ENCODE measurements at regions of chr15 and their contacts with region 1.

Region 1: DNA sequence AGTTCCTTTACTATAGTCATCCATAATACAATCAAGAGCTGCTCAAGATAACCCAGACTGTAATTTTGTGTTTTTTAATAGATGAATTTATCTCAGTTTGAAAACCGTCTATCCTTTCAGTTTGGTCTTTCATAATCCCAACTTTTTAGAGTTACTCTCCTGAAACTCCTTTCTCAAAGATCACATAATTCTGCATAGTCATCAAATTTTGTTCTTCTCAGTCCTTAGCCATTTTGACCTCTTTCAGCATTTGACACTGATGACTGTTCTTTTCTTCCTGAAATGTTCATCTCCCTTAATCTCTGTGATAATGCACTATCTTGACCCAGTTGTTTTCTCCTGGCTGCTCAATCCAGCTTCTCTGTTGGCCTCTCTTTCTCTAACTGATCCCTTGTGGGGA is 47.5 kb upstream of the RAD51 start:
- DNase-seq: no peak
- H3K4me3 Mint-ChIP-seq: no peak overlapping the region
- H3K27ac Mint-ChIP-seq: no peak overlapping the region
- H3K4me1 Mint-ChIP-seq: peaks cover 5% of the 10 kb centered on the region
- H3K27me3 Mint-ChIP-seq: no peaks in the 10 kb centered on the region

Region 2: GRCh38 chr15:40716165-40716564 is 68.6 kb after region 1 on chr15:
- intact Hi-C with region 1: loop called (anchors 10 kb)
- DNase-seq: no peak
- H3K4me3 Mint-ChIP-seq: no peak overlapping the region
- H3K27ac Mint-ChIP-seq: no peak overlapping the region
- H3K4me1 Mint-ChIP-seq: peaks cover 7% of the 10 kb centered on the region
- H3K27me3 Mint-ChIP-seq: no peaks in the 10 kb centered on the region

Region 3: DNA sequence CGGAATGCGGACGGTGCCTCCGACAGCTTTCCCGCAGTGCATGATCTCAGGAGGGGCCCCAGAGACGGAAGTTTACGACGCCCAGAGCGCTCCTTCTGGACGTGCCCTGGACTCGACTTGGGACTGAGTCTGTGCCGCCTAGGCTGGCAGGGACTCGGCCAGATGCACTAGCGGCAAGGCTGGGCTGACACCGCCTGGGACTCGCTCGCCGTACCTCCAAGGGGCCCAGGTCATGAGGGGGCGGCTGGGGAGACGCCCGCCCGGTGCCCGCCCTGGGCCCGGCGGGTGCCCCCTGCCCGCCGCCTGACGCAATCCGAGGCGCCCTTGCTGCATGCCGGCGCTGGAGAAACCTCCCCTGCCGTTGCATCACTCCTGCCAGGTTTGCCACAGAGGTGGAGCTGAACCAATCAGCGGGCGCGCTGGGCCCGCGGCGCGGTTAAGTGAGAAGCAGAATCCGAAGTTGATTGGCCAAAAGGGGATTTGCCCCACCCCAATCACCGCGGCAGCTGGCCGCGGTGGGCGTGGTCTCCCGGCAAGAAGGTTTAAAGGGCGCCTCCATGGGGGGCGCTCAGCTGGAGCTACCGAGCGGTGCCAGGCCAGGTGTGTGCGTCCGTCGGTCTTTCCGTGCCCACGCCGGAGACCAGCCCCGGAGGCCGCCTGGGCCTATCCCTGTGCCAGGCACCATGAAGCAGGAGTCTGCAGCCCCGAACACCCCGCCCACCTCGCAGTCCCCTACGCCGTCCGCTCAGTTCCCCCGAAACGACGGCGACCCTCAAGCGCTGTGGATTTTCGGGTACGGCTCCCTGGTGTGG is 305.6 kb after region 1 on chr15 and contains the start of gene CHAC1:
- intact Hi-C with region 1: no loop called
- DNase-seq: peak; percentile 99
- H3K4me3 Mint-ChIP-seq: peak within 1 kb of the TSS; percentile 92
- H3K27ac Mint-ChIP-seq: peak within 1 kb of the TSS; percentile 91
- H3K4me1 Mint-ChIP-seq: peaks cover 32% of the 10 kb centered on the region
- H3K27me3 Mint-ChIP-seq: no peaks in the 10 kb centered on the region
- total RNA-seq, gene CHAC1: 8.4 and 9.8 TPM in 2 replicates